K562 (cell line): ENCODE measurements at regions of chr19 and their contacts with region 1.

Region 1: GRCh38 chr19:36214386-36215275 is at the starts of genes ZNF146 and ZNF565:
- DNase-seq: peak; percentile 91 to 99 (median 94)
- ATAC-seq: peak; percentile 94
- H3K4me3 ChIP-seq: peak within 1 kb of the TSS; percentile 80
- H3K27ac ChIP-seq: peak within 1 kb of the TSS; percentile 97
- H3K4me1 ChIP-seq: peaks cover 4 to 17% of the 10 kb centered on the region in 2 experiments; a peak in 4 of 5 replicates
- H3K27me3 ChIP-seq: no peaks in the 10 kb centered on the region
- CTCF ChIP-seq: no peak; a peak in 1 of 6 replicates
- EP300 ChIP-seq: no peak; the same call in 1 of the 2 replicates
- POLR2A ChIP-seq: peak; percentile 95
- RAD21 ChIP-seq: no peak
- polyA plus RNA-seq, gene ZNF146: 36.2 to 116 TPM
- polyA plus RNA-seq, gene ZNF565: 2.6 to 2.7 TPM

Region 2: GRCh38 chr19:36203293-36203692 is 11.3 kb before region 1 on chr19:
- CTCF ChIA-PET with region 1: no interaction called
- POLR2A ChIA-PET with region 1: interaction called, 13 read pairs
- in situ Hi-C with region 1: no loop called
- intact Hi-C with region 1: no loop called
- DNase-seq: no peak
- ATAC-seq: no peak
- H3K4me3 ChIP-seq: no peak overlapping the region
- H3K27ac ChIP-seq: no peak overlapping the region
- H3K4me1 ChIP-seq: no peaks in the 10 kb centered on the region
- H3K27me3 ChIP-seq: no peaks in the 10 kb centered on the region
- CTCF ChIP-seq: no peak
- EP300 ChIP-seq: no peak
- POLR2A ChIP-seq: no peak
- RAD21 ChIP-seq: no peak

Region 3: DNA sequence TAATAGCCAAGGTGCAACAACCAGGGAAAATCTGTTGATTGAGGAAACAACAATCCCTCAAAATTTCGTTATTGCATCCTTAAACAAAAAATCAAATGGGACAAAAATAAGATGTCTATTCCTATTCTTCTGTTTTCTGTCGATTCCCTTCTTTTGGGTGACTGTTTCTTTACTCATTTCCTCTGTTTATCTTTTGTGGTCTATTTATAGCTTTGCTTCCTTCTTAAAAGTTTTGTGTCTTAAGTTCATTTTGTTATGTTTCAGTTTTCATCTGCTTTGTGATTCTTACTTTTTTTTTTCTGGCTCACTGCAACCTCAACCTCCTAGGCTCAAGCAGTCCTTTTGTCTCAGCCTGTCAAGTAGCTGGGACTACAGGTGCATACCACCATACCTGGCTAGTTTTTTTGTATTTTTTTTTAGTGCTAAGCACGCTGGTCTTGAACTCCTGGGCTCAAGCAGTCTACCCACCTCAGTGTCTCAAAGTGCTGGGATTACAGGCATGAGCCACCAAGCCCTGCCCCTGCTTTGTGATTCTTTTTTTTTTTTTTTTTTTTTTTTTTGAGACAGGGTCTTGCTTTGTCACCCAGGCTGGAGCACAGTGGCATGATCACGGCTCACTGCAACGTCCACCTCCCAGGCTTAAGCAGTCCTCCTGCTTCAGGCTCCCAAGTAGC is 10.7 kb after region 1 on chr19:
- CTCF ChIA-PET with region 1: no interaction called
- POLR2A ChIA-PET with region 1: interaction called, 11 read pairs
- in situ Hi-C with region 1: no loop called
- intact Hi-C with region 1: no loop called
- DNase-seq: no peak
- ATAC-seq: no peak
- H3K4me3 ChIP-seq: no peak overlapping the region
- H3K27ac ChIP-seq: no peak overlapping the region
- H3K4me1 ChIP-seq: peaks cover 0 to 4% of the 10 kb centered on the region in 2 experiments; a peak in 2 of 5 replicates
- H3K27me3 ChIP-seq: no peaks in the 10 kb centered on the region
- CTCF ChIP-seq: no peak
- EP300 ChIP-seq: no peak
- POLR2A ChIP-seq: no peak
- RAD21 ChIP-seq: no peak